Transverse colon (tissue), 4 donors: ENCODE measurements at regions of chr5 and their contacts with region 1.

Region 1: GRCh38 chr5:149035372-149035790 is 27.5 kb downstream of the SH3TC2 start:
- DNase-seq: peak; percentile 76
- H3K4me3 ChIP-seq: no peak overlapping the region
- H3K27ac ChIP-seq: no peak overlapping the region
- H3K4me1 ChIP-seq: no peaks in the 10 kb centered on the region
- H3K27me3 ChIP-seq: no peaks in the 10 kb centered on the region
- CTCF ChIP-seq: peak; percentile 76 to 79 (median 78)
- EP300 ChIP-seq: no peak
- POLR2A ChIP-seq: no peak

Region 2: GRCh38 chr5:148179234-148179824 is 856.1 kb before region 1 on chr5:
- in situ Hi-C with region 1: loop called in 1 of 4 experiments (anchors 25 kb)
- intact Hi-C with region 1: no loop called
- DNase-seq: no peak
- H3K4me3 ChIP-seq: no peak overlapping the region
- H3K27ac ChIP-seq: no peak overlapping the region
- H3K4me1 ChIP-seq: no peaks in the 10 kb centered on the region
- H3K27me3 ChIP-seq: no peaks in the 10 kb centered on the region
- CTCF ChIP-seq: peak; percentile 57 to 72 (median 63)
- EP300 ChIP-seq: no peak
- POLR2A ChIP-seq: no peak

Region 3: DNA sequence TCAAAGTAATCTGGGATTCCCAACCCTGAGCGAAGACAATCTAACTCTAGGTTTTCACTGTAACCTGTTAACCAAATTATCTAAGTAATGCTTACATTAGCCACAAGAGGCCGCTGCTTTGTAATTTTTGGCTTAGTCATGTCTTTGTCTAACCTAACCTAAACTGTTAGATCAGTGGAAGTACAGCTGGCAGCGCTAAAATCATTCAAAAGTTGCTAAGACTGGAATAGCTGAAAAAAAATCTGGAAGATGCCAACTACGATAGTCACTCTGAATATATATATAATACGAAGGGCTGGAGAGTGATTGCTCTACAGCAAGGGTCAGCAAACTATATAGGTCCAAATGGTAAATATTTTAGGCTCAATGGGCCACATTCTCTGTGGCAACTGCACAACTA is 591.4 kb before region 1 on chr5:
- in situ Hi-C with region 1: loop called in 3 of 4 experiments (anchors 10 to 25 kb)
- intact Hi-C with region 1: no loop called
- DNase-seq: peak; percentile 25
- H3K4me3 ChIP-seq: no peak overlapping the region
- H3K27ac ChIP-seq: no peak overlapping the region
- H3K4me1 ChIP-seq: peaks cover 3 to 26% (median 7%) of the 10 kb centered on the region in 4 donors
- H3K27me3 ChIP-seq: no peaks in the 10 kb centered on the region
- CTCF ChIP-seq: peak; percentile 68 to 81 (median 74)
- EP300 ChIP-seq: no peak
- POLR2A ChIP-seq: no peak

Region 4: GRCh38 chr5:148708854-148709253 is 326.5 kb before region 1 on chr5:
- in situ Hi-C with region 1: no loop called
- intact Hi-C with region 1: no loop called
- DNase-seq: no peak
- H3K4me3 ChIP-seq: no peak overlapping the region
- H3K27ac ChIP-seq: no peak overlapping the region
- H3K4me1 ChIP-seq: no peaks in the 10 kb centered on the region
- H3K27me3 ChIP-seq: no peaks in the 10 kb centered on the region
- CTCF ChIP-seq: no peak
- EP300 ChIP-seq: no peak
- POLR2A ChIP-seq: no peak

Region 5: GRCh38 chr5:148739524-148739923 is 295.9 kb before region 1 on chr5:
- in situ Hi-C with region 1: loop called (anchors 5 to 25 kb)
- intact Hi-C with region 1: no loop called
- DNase-seq: no peak
- H3K4me3 ChIP-seq: no peak overlapping the region
- H3K27ac ChIP-seq: no peak overlapping the region
- H3K4me1 ChIP-seq: peaks cover 0 to 10% (median 0%) of the 10 kb centered on the region in 4 donors
- H3K27me3 ChIP-seq: no peaks in the 10 kb centered on the region
- CTCF ChIP-seq: no peak
- EP300 ChIP-seq: no peak
- POLR2A ChIP-seq: no peak

Region 6: DNA sequence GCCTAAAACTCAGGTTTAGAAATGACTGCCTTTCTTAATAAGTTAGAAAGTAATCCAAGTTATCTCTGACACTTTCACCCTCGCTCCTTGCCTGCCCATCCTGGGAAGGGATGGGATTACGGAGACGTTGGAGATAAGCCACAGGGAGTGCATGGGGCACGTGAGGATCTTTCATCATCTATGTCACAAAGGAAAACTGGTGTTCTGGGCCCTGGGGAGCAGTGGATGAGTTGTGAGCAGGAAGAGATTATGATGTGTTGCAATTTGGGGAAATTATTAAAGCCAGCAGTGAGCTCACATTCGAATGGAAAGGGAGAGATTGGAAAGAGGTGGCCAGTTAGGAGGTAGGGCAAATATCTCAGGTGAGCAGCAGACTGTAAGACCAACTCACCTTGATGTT is 249.1 kb after region 1 on chr5:
- in situ Hi-C with region 1: no loop called
- intact Hi-C with region 1: no loop called
- DNase-seq: no peak
- H3K4me3 ChIP-seq: no peak overlapping the region
- H3K27ac ChIP-seq: no peak overlapping the region
- H3K4me1 ChIP-seq: peaks cover 0 to 7% (median 0%) of the 10 kb centered on the region in 4 donors
- H3K27me3 ChIP-seq: no peaks in the 10 kb centered on the region
- CTCF ChIP-seq: no peak
- EP300 ChIP-seq: no peak
- POLR2A ChIP-seq: no peak